AG04450 (cell line): ENCODE measurements at regions of chr2 and their contacts with region 1.

Region 1: GRCh38 chr2:187499941-187500532 is 52.0 kb upstream of the CALCRL start:
- DNase-seq: peak; percentile 29
- H3K4me3 ChIP-seq: no peak overlapping the region
- H3K27ac ChIP-seq: no peak overlapping the region
- H3K27me3 ChIP-seq: no peaks in the 10 kb centered on the region
- CTCF ChIP-seq: peak; percentile 90

Region 2: GRCh38 chr2:187271825-187272224 is 228.2 kb before region 1 on chr2:
- CTCF ChIA-PET with region 1: no interaction called
- POLR2A ChIA-PET with region 1: no interaction called
- DNase-seq: no peak
- H3K4me3 ChIP-seq: no peak overlapping the region
- H3K27ac ChIP-seq: no peak overlapping the region
- H3K27me3 ChIP-seq: no peaks in the 10 kb centered on the region
- CTCF ChIP-seq: no peak

Region 3: DNA sequence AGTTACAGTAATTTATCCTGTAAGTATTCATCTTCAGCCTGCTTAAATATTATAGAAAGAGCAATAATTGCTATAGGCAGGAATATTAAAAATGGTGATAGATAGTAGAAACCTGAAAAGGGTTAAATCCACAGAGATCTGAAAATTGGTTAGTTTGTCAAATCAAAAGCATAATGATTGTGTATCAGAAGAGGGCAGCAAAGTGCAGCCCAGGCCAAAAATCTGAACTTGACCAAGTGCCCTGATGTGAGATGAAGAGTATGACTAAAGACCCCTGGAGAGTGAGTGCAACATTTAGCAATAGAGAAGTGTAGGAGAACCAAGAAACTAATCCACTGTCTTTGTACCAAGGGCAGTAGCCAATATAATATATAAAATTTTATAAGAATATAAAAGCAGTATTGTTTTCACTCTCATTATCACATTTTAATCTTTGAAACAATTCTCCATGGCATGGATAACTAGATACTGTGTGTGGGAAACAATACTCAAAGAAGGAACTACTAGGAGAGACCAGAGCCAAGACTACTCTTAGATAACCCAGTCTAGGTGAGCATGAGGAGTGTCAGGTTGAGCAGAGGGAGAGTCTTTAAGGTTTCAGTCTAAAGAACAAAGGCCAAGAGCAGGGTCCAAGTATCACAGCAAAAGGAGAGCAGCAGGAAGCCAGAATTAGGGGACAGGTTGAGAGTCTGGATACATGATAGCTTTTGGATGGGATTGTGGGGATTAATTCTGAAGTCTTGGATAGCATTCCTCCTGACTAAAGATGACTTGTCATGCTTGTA is 200.7 kb before region 1 on chr2:
- CTCF ChIA-PET with region 1: no interaction called
- POLR2A ChIA-PET with region 1: no interaction called
- DNase-seq: no peak
- H3K4me3 ChIP-seq: no peak overlapping the region
- H3K27ac ChIP-seq: no peak overlapping the region
- H3K27me3 ChIP-seq: no peaks in the 10 kb centered on the region
- CTCF ChIP-seq: peak; percentile 34

Region 4: DNA sequence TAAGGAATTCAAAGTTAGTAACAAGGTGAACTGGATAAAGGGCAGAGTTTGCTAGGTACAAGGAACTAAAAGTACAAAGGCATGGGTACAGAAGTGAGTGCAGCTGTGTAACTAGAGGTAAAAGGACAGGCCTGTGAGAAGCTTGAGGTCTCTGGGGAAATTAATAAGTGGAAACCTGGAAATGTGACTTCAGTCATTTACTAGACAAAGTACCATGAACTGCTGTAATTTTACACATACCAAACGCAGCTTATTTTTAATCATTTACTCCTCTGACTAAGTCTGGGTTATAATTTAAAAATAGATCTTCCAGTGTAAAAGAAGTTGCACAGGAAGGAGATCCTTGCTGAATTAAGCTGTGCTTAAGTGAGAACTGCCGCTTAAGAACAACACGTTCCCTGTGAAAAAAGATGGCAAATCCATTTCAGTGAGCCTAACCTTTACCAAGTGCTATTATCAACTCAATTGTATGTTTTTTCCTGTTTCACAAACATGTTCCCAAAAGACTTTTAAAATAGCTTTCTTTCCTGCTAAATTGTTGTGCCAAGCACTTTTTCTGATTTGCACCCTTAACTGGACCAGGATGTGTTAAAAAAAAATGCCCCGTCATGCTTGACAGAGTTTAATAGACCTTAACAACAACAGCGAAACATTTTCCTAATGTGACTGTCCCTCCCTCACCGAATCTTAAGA is 96.3 kb before region 1 on chr2:
- CTCF ChIA-PET with region 1: no interaction called
- POLR2A ChIA-PET with region 1: no interaction called
- DNase-seq: no peak
- H3K4me3 ChIP-seq: no peak overlapping the region
- H3K27ac ChIP-seq: no peak overlapping the region
- H3K27me3 ChIP-seq: no peaks in the 10 kb centered on the region
- CTCF ChIP-seq: no peak

Region 5: DNA sequence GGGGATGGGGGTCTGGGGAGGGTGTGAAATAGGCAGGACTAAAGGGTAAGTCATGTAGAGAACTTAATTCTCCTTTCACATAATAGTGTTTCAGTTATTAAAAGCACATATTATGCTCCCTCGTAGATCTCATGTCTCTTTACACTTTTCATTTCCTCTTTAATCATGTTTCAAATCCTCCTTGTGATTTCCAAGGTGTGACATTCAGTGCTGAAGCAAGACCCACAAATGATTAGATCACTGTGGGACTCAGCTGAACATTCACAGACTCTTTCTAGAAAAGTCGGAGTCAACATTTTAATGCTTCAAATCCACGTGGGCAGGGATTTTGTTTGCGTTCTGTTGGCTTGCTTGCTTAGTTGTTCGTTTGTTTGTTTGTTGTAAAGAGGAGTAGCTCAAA is 17.2 kb before region 1 on chr2:
- CTCF ChIA-PET with region 1: interaction called, 13 read pairs
- POLR2A ChIA-PET with region 1: no interaction called
- DNase-seq: no peak
- H3K4me3 ChIP-seq: no peak overlapping the region
- H3K27ac ChIP-seq: no peak overlapping the region
- H3K27me3 ChIP-seq: no peaks in the 10 kb centered on the region
- CTCF ChIP-seq: no peak

Region 6: DNA sequence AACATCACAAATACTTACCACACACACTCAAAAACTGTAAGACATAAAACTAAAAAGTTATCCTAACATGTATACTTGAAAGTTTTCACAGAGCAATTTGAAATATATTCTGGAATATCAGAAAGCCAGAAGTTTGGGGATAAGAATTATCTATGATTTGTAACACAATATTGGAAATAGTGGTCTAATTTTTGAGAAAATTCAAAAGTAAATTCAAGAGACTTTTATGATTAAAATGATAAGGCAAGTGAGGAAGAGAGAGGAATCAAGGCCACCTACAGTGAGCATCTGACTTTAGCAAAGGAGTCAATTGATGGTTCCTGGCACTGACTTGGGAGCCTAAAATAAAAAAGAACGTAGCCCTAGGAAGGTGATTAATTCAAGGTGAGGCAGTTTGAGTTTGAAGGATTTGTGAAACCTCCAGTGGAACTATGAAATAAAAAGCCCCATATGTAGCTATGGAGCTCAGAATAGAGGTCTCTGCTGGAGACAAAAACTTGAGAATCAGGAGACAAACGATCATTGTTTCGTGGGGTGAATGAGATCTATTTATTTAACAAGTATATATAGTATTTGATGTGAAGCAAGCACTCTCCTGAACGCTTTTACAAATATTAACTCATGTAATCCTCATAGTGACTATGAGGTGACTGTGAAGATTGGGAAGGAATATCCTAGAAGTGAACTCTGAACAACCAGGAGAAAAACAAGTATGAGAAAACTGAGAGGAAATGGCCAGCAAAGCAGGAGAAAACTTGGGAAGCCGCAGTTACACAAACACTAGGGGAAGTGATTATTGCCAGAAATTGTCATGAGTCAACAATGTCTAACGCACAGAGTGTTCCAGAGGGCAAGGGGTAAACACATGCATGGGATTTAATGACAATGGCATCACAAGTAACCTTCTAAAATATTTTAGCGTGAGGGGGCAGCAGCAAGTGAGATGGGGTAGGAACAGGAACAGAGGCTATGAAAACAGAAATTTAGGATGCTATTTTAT is 41.3 kb after region 1 on chr2:
- CTCF ChIA-PET with region 1: interaction called, 30 read pairs
- POLR2A ChIA-PET with region 1: no interaction called
- DNase-seq: peak; percentile 49
- H3K4me3 ChIP-seq: no peak overlapping the region
- H3K27ac ChIP-seq: peak overlapping the region; percentile 49
- H3K27me3 ChIP-seq: no peaks in the 10 kb centered on the region
- CTCF ChIP-seq: no peak

Region 7: GRCh38 chr2:187567126-187567525 is 67.1 kb after region 1 on chr2:
- CTCF ChIA-PET with region 1: interaction called, 88 read pairs
- POLR2A ChIA-PET with region 1: no interaction called
- DNase-seq: peak; percentile 33
- H3K4me3 ChIP-seq: no peak overlapping the region
- H3K27ac ChIP-seq: no peak overlapping the region
- H3K27me3 ChIP-seq: no peaks in the 10 kb centered on the region
- CTCF ChIP-seq: no peak

Region 8: DNA sequence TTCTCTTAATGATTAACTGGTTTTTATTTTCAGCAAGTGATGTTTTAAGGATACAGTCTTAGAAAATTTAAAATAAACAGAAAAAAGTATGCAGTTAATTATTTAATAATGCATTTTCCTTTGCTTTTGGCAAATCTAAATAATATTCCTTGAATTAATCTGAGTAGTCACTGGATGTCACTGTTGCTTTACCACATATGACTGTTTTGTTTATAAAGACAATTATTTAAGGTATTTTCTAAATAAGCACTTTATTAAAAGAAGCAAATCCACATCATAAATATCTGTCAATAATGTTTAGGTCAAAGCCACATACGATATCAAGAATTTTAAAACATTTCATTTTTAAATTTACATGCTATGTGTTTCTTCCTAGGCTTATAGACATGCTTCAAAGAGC is 94.8 kb after region 1 on chr2:
- CTCF ChIA-PET with region 1: interaction called, 27 read pairs
- POLR2A ChIA-PET with region 1: no interaction called
- DNase-seq: no peak
- H3K4me3 ChIP-seq: no peak overlapping the region
- H3K27ac ChIP-seq: no peak overlapping the region
- H3K27me3 ChIP-seq: no peaks in the 10 kb centered on the region
- CTCF ChIP-seq: no peak